ENCODE measurements at regions of chr6 and their contacts with region 1.

Region 1: DNA sequence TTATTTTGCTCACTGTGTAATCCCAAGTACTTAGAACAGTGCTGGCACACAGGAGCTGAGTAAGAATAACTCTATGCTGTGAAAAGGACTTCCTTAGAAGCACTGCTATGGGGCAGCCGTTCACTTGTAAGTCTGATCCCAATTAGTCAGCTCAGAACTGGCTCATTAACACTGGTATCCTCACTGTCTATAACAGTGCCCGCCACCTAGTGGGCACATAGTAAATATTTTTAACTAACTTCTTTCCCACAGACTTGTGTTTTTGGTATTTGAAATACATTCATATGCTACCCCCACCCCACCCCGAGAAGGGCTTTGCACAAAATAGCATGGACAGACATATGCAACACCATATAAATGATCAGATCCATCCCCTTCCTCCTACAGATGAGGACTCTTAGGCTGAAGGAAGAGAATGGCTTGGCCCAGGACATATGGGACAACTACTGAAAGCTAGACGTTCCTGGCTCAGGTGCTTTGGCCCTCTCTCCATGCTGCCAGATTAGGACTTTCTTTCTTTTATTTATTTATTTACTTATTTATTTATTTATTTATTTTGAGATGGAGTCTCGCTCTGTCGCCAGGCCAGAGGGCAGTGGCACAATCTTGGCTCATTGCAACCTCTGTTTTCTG is 47.1 kb downstream of the DST start:
- DNase-seq: peak; percentile 15
- CTCF ChIP-seq: peak; percentile 67

Region 2: DNA sequence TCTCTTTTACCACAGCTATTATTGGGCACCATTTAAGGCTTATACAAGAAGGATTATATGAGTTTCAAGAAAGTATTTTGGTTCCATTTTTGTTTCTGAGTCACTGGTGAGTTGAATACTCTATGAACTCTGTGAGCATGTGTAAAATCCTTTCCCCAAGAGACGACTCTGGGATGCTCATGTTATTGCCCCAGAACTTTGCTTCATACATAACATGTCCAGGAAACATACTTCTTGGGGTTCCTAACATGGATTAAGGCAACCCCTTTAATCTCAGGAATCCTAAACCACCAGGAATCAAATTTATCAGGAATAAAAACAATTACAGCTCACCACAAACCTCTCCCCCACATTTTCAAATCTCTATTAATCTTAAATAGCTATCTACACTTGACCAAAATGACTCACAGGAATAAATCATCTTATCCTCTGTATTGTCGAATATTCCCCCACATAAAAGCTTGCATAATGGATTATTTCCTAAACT is 230.7 kb before region 1 on chr6:
- in situ Hi-C with region 1: loop called (anchors 10 kb)
- DNase-seq: no peak
- CTCF ChIP-seq: no peak